Left lung (tissue), 14 donors: ENCODE measurements at regions of chr9 and their contacts with region 1.

Region 1: DNA sequence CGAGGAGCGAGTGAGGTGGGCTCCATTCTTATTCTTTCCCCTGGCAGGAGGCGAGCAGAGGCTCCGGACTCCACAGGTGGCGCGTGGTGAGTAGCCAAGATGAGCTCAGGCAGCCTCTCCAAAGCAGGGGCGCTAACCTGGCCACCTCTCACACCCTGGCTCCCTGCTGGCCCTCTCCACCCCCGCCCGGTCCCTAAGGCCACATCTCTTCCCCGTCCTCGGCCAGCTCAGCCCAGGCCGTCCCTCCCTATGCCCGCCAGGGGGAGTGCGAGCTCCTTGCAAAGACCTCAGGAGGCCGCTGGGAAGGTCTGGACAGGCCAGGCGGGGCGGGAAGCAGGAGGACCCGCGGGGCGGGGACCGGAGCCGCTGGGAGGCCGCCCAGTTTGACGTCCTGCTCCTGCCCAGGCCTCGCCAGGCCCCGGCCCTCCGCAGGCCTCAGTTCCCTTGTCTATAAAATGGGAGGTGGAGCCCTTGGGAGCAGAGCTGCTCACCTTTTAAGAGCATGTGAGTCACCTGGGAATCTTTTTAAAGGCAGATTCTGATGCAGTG is 46.3 kb upstream of the GGTA1 start:
- DNase-seq: peak; percentile 91 to 97 (median 96)
- ATAC-seq: peak; percentile 99
- H3K4me3 ChIP-seq: no peak overlapping the region
- H3K27ac ChIP-seq: no peak overlapping the region
- H3K4me1 ChIP-seq: peaks cover 9 to 20% of the 10 kb centered on the region in 2 donors
- H3K27me3 ChIP-seq: peaks cover 0 to 5% of the 10 kb centered on the region in 2 donors
- CTCF ChIP-seq: peak; percentile 90 to 97

Region 2: DNA sequence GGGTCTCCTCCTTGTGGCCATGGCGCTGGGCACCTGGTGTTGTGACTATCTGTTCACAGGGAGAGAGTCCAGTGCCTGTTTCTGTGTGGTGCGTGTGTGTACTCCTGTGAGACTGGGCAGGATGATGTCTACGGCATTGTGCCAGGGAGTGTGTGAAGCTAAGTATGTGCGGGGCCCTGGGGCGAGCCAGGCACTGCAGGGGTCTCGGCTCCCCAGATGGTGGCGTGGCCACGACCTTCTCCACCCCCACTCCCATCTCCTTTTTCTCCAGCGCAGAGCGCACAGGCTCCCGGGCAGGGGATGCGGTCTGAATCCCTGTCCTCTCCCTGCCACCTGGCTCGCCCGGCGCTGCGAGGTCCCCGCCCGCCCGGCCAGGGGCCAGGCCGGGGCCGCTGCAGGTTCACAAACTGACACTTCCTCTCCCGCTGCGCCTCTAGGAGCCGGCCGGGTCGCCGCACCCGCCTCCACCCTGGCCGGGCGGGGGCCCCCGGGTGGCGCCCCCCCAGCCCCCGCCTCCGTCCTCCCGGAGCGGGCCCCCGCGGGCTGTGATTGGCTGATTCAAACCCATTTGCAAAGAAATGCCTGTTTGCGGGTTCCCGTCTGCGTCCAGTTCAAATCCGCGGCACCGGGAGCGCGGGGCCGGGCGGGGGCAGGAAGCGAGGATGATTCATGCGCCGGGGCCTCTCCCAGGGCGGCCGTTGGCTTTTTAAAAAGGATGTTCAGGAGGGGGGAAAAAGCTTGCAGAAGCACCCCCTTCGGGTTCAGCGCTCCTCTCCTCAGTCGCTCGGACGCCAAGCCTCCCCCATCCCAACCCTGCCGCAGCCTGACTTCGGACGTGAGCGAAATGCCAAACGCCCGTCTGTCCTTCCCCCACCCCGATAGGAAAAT is 669.8 kb before region 1 on chr9:
- intact Hi-C with region 1: no loop called
- DNase-seq: peak in 3 of 4 donors; percentile 71 to 95 (median 91)
- ATAC-seq: peak; percentile 85
- H3K4me3 ChIP-seq: peak overlapping the region; percentile 56 to 85
- H3K27ac ChIP-seq: peak overlapping the region; percentile 94
- H3K4me1 ChIP-seq: peaks cover 2 to 35% of the 10 kb centered on the region in 2 donors
- H3K27me3 ChIP-seq: no peaks in the 10 kb centered on the region
- CTCF ChIP-seq: no peak

Region 3: DNA sequence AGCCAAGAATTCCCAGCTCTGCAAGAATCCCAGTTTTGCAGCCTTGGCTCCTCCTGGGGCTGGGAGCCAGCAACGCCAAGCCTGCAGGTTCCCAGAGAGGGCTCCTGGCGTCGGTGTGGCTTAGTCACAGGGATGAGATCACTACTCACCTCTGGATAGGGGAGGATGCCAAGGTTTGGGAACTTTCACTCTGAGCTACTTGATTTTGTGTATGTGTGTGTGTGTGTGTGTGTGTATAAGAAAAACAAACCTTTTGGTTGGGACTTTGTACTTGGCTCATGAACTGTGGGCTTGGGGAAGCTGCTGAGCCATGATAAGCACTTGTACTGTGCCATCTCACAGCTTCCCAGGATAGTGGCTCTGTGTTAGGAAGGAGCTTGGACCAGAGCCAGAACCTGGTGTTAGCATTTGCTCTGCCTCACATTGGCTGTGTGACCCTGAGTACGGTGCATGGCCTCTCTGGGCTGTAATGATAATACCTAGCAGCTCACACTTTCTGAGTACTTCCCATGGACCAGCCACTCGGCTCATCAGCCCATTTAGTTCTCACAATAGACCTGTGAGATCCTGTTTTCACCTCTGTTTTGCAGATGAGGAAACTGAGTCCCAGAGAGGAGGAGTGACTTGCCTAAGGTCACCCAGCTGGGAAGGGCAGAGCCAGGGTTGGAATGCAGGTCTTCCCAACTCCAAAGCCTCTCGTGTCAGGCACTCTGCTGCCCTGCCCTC is 64.1 kb after region 1 on chr9:
- intact Hi-C with region 1: loop called in 1 of 2 experiments (anchors 10 kb)
- DNase-seq: peak in 2 of 4 donors; percentile 55 to 80
- ATAC-seq: peak; percentile 70
- H3K4me3 ChIP-seq: no peak overlapping the region
- H3K27ac ChIP-seq: no peak overlapping the region
- H3K4me1 ChIP-seq: peaks cover 11 to 28% of the 10 kb centered on the region in 2 donors
- H3K27me3 ChIP-seq: peaks cover 0 to 9% of the 10 kb centered on the region in 2 donors
- CTCF ChIP-seq: no peak

Region 4: DNA sequence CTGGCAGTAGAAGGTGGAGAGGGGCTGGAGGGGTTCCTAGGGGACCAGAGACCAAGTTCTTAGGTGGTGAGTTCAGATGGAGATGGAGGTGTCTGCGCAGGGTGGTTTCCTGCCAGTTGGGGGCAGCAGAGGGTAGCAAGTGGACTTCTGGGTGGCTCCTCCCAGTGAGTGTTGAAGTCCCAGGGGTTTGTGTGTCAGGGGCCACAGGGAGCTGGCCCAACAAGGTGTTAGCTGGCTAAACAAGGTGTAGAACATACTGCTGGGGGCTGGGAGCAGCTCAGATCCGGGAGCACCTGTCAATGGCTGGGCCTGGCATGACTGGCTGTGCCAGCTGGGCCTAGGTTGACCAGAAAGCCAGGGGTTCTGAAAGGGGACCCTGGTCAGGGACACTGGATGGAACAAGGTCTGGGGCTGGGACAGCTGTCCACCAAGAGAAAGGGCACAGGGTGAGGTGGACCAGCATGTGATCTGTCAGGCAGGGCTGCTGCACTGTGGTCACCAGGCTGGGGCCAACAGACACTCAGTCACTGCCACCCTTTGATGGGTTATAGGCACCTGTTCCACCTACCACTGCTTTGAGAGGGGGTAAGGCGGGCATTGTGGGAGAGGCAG is 141.1 kb after region 1 on chr9:
- intact Hi-C with region 1: loop called in 1 of 2 experiments (anchors 5 kb)
- DNase-seq: peak; percentile 47 to 82 (median 71)
- ATAC-seq: peak; percentile 91
- H3K4me3 ChIP-seq: no peak overlapping the region
- H3K27ac ChIP-seq: no peak overlapping the region
- H3K4me1 ChIP-seq: peaks cover 0 to 3% of the 10 kb centered on the region in 2 donors
- H3K27me3 ChIP-seq: no peaks in the 10 kb centered on the region
- CTCF ChIP-seq: peak; percentile 82 to 86

Region 5: GRCh38 chr9:121992571-121993212 is 446.7 kb after region 1 on chr9:
- intact Hi-C with region 1: loop called in 1 of 2 experiments (anchors 5 kb)
- DNase-seq: peak in 2 of 4 donors; percentile 73 to 81
- ATAC-seq: peak; percentile 93
- H3K4me3 ChIP-seq: no peak overlapping the region
- H3K27ac ChIP-seq: no peak overlapping the region
- H3K4me1 ChIP-seq: no peaks in the 10 kb centered on the region
- H3K27me3 ChIP-seq: no peaks in the 10 kb centered on the region
- CTCF ChIP-seq: peak; percentile 80 to 88